MCF 10A (cell line): ENCODE measurements at regions of chr16 and their contacts with region 1.

Region 1: DNA sequence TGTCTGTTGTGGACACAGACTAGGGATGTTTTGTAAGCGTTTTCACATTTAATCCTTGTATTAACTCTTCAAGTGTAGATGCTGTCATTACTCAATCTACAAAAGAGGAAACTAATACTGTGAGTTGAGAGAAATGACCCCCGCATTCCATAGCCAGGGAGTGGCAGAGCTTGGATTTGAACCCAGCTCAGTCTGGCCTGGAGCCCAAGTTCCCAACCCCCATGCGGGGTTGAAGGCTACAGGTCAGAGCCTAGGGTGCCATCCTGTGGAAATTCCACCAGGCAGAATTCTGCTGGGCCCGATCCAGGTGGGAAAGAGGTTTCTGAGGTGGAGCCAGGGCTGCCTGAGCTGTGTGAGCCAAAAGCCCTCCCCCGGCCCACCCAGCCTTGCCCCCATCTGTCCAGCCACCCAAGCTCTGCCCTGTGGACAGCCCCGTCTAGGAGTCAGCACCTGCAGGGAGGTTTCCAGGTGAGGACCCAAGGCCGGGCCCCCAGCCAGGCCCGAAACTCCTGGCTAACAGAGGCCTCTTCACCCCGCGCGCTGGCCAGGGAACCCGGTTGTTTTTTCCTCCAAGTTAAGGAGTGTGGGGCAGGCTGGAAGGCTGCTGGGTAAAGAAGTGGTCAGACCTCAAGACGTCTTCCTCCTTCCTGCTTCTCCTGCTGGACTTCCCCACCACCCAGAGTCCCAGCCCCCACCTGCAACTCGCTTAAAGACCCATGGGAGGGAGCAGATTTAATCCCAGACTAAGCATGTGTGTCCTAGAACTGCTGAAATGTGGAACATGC is 5.7 kb downstream of the MMP15 start:
- DNase-seq: no peak
- H3K4me3 Mint-ChIP-seq: no peak overlapping the region
- H3K27ac Mint-ChIP-seq: no peak overlapping the region
- H3K4me1 Mint-ChIP-seq: no peaks in the 10 kb centered on the region
- H3K27me3 Mint-ChIP-seq: no peaks in the 10 kb centered on the region
- CTCF ChIP-seq: no peak

Region 2: GRCh38 chr16:57916735-57917451 is 114.3 kb before region 1 on chr16:
- CTCF ChIA-PET with region 1: no interaction called
- POLR2A ChIA-PET with region 1: no interaction called
- intact Hi-C with region 1: no loop called
- DNase-seq: peak; percentile 54
- H3K4me3 Mint-ChIP-seq: peak overlapping the region; percentile 52
- H3K27ac Mint-ChIP-seq: no peak overlapping the region
- H3K4me1 Mint-ChIP-seq: peaks cover 24% of the 10 kb centered on the region
- H3K27me3 Mint-ChIP-seq: no peaks in the 10 kb centered on the region
- CTCF ChIP-seq: no peak

Region 3: GRCh38 chr16:58077853-58078252 is 46.6 kb after region 1 on chr16:
- CTCF ChIA-PET with region 1: no interaction called
- POLR2A ChIA-PET with region 1: no interaction called
- intact Hi-C with region 1: loop called (anchors 1 kb)
- DNase-seq: no peak
- H3K4me3 Mint-ChIP-seq: no peak overlapping the region
- H3K27ac Mint-ChIP-seq: no peak overlapping the region
- H3K4me1 Mint-ChIP-seq: peaks cover 5% of the 10 kb centered on the region
- H3K27me3 Mint-ChIP-seq: no peaks in the 10 kb centered on the region
- CTCF ChIP-seq: no peak